CD4-positive, alpha-beta T cell (primary cell): ENCODE measurements at regions of chr2 and their contacts with region 1.

Region 1: DNA sequence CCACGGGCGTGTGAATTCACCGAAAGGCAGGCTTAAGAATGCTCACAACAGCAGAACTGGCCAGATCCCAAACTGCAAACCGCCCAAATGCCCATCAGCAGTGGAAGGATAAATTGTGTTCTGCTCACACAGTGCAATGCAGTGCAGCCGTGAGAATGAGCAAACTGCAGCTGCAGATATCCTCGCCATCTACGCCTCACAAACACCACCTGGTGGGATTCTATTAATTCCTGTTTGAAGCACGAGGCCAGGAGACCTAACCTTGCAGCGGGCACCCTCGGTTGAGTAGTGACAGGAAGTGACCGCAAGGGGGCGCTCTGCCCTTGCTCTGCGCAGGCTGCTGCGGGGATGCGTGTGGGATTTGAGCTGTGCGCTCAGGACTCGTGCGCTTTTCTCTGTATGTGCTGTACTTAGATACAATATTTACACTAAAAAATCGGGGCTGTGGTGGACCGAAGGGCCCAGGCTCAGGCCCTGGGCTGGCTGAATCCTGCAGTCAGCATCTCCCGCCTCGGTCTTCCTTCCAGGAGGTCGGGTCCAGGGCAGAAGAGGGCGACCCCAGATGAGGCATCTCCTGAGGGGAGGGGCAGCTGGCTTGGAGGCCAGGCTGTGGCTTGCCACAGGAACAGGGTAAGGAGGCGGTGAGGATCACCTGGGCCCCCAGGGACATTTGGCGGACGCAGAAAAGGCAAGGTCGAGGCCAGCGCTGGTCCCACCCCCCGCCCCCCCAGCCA is 19.8 kb upstream of the PDIA6 start:
- DNase-seq: peak; percentile 69 to 91 (median 78)
- ATAC-seq: peak; percentile 93
- H3K4me3 ChIP-seq: no peak overlapping the region
- H3K4me3 Mint-ChIP-seq: peak overlapping the region; percentile 38
- H3K27ac ChIP-seq: no peak overlapping the region
- H3K27ac Mint-ChIP-seq: no peak overlapping the region
- H3K4me1 ChIP-seq: peaks cover 15% of the 10 kb centered on the region
- H3K4me1 Mint-ChIP-seq: peaks cover 7% of the 10 kb centered on the region
- H3K27me3 ChIP-seq: peaks cover 8 to 10% of the 10 kb centered on the region in 2 experiments
- H3K27me3 Mint-ChIP-seq: peaks cover 24% of the 10 kb centered on the region
- CTCF ChIP-seq: peak; percentile 99

Region 2: GRCh38 chr2:11124503-11125068 is 292.2 kb after region 1 on chr2:
- CTCF ChIA-PET with region 1: interaction called, 21 read pairs
- POLR2A ChIA-PET with region 1: interaction called, 13 read pairs
- intact Hi-C with region 1: loop called (anchors 1 kb)
- DNase-seq: peak; percentile 36 to 79 (median 56)
- ATAC-seq: peak; percentile 89
- H3K4me3 ChIP-seq: no peak overlapping the region
- H3K4me3 Mint-ChIP-seq: no peak overlapping the region
- H3K27ac ChIP-seq: no peak overlapping the region
- H3K27ac Mint-ChIP-seq: no peak overlapping the region
- H3K4me1 ChIP-seq: peaks cover 21% of the 10 kb centered on the region
- H3K4me1 Mint-ChIP-seq: peaks cover 22% of the 10 kb centered on the region
- H3K27me3 ChIP-seq: no peaks in the 10 kb centered on the region
- H3K27me3 Mint-ChIP-seq: no peaks in the 10 kb centered on the region
- CTCF ChIP-seq: peak; percentile 30

Region 3: DNA sequence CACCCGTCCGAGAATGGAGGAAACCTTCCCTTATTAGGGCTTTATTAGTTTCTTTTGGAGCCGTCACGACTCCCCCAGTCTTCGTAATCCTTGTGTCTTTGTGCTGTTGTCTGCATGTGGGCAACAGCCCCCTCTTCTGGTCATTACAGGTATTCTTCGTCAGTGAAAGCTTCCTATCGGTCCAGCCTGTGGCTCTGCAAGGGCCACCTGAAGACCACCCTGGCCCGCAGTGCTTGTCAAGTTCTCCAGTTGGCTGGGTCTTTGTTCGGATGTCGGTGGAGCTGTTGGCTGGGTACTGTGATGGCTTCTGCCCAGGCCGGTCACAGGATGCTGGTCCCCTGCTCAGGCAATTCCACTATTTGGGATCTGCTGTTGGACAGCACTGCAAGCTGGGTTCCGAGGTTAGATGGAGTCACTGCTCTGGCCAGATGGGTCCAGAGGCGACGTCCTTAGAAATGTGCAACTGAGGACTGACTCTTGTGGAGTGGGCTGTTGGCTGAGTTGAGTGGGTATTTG is 614.4 kb after region 1 on chr2:
- CTCF ChIA-PET with region 1: interaction called, 6 read pairs
- POLR2A ChIA-PET with region 1: no interaction called
- intact Hi-C with region 1: loop called (anchors 1 to 2 kb)
- DNase-seq: peak; percentile 19 to 75 (median 34)
- ATAC-seq: peak; percentile 74
- H3K4me3 ChIP-seq: no peak overlapping the region
- H3K4me3 Mint-ChIP-seq: no peak overlapping the region
- H3K27ac ChIP-seq: no peak overlapping the region
- H3K27ac Mint-ChIP-seq: no peak overlapping the region
- H3K4me1 ChIP-seq: no peaks in the 10 kb centered on the region
- H3K4me1 Mint-ChIP-seq: no peaks in the 10 kb centered on the region
- H3K27me3 ChIP-seq: no peaks in the 10 kb centered on the region
- H3K27me3 Mint-ChIP-seq: no peaks in the 10 kb centered on the region
- CTCF ChIP-seq: peak; percentile 80

Region 4: GRCh38 chr2:11465497-11466406 is 633.4 kb after region 1 on chr2 and contains the start of gene E2F6:
- CTCF ChIA-PET with region 1: interaction called, 3 read pairs
- POLR2A ChIA-PET with region 1: no interaction called
- intact Hi-C with region 1: loop called in 1 of 2 experiments (anchors 5 kb)
- DNase-seq: peak; percentile 68 to 88 (median 81)
- ATAC-seq: peak; percentile 81
- H3K4me3 ChIP-seq: peak within 1 kb of the TSS; percentile 92
- H3K4me3 Mint-ChIP-seq: peak within 1 kb of the TSS; percentile 98
- H3K27ac ChIP-seq: peak within 1 kb of the TSS in 1 of 2 donors; percentile 11
- H3K27ac Mint-ChIP-seq: peak within 1 kb of the TSS; percentile 81
- H3K4me1 ChIP-seq: peaks cover 21% of the 10 kb centered on the region
- H3K4me1 Mint-ChIP-seq: peaks cover 49% of the 10 kb centered on the region
- H3K27me3 ChIP-seq: no peaks in the 10 kb centered on the region
- H3K27me3 Mint-ChIP-seq: no peaks in the 10 kb centered on the region
- CTCF ChIP-seq: no peak
- total RNA-seq, gene E2F6: 3.5 to 4.2 TPM

Region 5: DNA sequence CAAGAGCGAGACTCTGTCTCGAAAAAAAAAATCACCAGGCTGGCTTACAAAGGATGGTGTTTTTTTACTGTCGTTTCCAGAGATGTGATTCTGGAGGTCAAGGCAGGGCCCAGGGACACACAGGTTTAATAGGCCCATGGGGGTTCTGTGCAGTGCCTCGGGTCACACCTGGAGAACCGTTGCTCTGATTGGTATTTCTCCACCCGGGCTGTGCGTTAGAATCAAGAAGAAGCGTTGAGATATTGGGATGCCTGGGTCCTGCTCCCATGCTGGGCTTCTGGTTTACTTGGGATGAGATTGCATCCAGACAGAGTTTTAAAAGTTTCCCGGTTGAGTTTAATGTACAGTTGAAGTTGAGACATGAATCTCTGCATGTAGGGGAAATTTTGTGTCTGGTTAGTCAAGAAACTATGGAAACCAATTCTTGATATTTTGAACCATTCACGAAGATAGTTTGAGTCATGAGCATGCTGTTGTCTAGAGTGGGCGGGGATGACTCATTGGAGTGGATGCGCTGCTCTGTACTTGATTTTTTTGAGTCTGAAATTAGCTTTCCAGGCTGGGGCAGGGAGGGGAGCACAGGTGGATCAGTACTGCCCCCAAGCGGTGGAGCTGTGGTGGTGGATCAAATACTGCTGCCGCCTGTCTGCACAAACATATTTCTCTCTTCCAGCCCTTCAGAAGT is 751.6 kb after region 1 on chr2:
- CTCF ChIA-PET with region 1: interaction called, 3 read pairs
- POLR2A ChIA-PET with region 1: no interaction called
- intact Hi-C with region 1: loop called (anchors 2 kb)
- DNase-seq: peak; percentile 25 to 72 (median 41)
- ATAC-seq: peak; percentile 81
- H3K4me3 ChIP-seq: no peak overlapping the region
- H3K4me3 Mint-ChIP-seq: no peak overlapping the region
- H3K27ac ChIP-seq: no peak overlapping the region
- H3K27ac Mint-ChIP-seq: no peak overlapping the region
- H3K4me1 ChIP-seq: no peaks in the 10 kb centered on the region
- H3K4me1 Mint-ChIP-seq: no peaks in the 10 kb centered on the region
- H3K27me3 ChIP-seq: no peaks in the 10 kb centered on the region
- H3K27me3 Mint-ChIP-seq: peaks cover 5% of the 10 kb centered on the region
- CTCF ChIP-seq: peak; percentile 35